Activated B cell treated with CpG ODN at 0.5 μM for 24 hours (primary cell): ENCODE measurements at regions of chr15 and their contacts with region 1.

Region 1: DNA sequence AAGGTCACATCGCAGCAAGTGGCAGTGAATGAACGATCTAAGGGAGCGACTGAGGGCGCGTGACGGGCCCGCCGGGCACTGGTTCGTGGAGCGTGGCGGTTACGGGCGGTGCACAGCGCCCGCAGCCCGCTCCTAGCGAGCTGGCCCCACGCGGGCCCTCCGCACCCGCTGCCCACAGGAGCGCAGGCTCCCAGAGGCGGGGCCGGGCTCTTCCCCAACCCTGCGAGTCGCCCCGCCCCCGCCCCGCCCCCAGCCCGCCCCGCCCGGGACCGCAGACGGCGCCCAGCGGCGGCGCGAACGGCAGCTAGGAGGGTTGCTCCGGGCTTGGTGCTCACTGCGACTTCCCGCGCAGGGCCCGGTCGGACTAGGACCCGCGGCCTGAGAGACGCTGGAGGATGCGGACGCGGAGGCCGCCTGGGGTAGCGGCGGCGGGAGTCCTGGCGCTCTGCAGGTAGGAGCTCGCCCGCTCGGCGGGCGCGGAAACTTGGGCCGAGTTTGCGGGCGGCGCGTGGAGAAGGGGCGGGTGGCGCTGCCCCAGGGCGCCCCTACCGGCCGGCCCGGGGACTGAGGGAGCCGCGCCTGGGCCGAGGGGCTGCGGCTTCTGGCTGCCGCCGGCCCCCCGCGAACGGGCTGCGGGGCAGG is at the start of gene C15orf39:
- DNase-seq: peak; percentile 83
- ATAC-seq: peak; percentile 58
- H3K4me3 Mint-ChIP-seq: peak within 1 kb of the TSS; percentile 90
- H3K27ac Mint-ChIP-seq: peak within 1 kb of the TSS; percentile 82
- H3K4me1 Mint-ChIP-seq: peaks cover 37% of the 10 kb centered on the region
- H3K27me3 Mint-ChIP-seq: peaks cover 4% of the 10 kb centered on the region
- CTCF ChIP-seq: no peak
- total RNA-seq, gene C15orf39: 59.6 and 73.2 TPM in 2 replicates

Region 2: DNA sequence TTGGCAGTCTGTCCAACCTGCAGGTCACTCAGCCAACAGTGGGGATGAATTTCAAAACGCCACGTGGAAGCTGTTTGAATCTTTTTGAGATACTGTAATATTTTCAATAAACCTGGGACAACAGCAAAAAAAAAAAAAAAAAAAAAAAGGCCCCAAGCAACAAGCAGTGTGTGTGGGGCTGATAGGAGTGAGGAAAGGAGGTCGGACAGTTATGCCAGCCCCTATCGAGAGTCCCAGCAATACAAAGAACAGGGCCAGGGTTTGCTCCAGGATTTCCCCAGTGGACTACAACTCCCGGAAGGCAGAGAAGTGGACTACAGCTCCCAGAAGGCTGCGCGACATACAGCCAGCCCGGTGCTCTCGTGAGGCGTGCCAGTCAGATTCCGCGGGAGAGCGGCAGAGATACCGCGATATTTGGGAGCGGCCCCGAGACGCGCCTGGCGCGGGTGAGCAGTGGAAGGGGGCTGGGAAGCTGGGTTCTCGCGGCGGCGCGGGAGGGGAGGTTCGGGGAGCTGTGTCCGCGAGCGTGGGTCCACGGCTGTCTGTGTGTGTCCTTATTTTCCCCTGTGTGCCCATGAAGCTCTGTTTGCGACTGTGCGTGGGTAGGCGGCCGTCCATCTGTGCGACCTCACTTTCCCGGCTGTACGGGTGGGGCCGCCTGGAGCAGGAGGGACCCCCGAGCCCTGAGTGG is 178.4 kb before region 1 on chr15 and contains the start of gene PPCDC:
- CTCF ChIA-PET with region 1: interaction called, 62 read pairs
- POLR2A ChIA-PET with region 1: interaction called, 11 read pairs
- intact Hi-C with region 1: loop called (anchors 1 kb)
- DNase-seq: peak; percentile 82
- ATAC-seq: peak; percentile 100
- H3K4me3 Mint-ChIP-seq: peak within 1 kb of the TSS; percentile 95
- H3K27ac Mint-ChIP-seq: peak within 1 kb of the TSS; percentile 86
- H3K4me1 Mint-ChIP-seq: peaks cover 9% of the 10 kb centered on the region
- H3K27me3 Mint-ChIP-seq: peaks cover 6% of the 10 kb centered on the region
- CTCF ChIP-seq: no peak
- total RNA-seq, gene PPCDC: 13.5 and 16.6 TPM in 2 replicates

Region 3: DNA sequence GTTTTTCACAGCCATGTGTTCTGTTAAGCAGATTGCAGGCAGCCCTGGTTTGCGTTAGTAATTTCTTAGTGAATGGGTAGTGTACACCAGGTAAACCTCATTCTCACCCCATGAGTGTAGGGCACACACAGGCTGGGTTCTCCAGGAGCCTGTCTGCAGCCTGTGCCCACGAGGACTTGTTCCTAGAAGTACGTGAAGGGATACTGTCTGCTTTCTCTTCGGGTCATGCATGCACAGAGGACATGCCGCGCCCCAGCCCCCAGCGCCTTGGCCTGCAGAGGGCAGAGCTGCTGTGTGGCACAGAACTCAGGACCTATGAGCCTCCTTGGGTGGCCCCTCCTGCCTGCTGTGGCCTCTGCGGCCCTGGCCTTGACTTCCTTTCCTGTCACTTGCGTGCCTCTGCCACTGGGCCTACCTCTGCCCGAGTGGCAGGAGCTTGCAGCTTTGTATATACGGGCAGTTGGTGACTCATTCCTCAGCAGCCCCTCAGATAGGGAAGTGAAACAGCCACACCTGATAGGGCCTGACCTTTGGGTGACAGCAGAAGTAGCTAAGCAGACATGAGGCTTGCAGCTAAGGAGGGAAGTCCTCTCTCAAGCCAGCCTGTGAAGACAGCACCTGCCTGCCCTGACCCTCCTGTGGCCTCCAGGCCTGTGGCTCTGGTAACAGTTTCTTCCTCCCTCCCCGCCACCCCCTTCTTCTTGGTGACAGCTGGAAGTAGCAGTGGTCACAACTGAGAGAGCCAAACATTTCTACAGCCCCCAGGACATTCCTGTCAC is 158.8 kb before region 1 on chr15:
- CTCF ChIA-PET with region 1: interaction called, 149 read pairs
- POLR2A ChIA-PET with region 1: interaction called, 8 read pairs
- intact Hi-C with region 1: loop called (anchors 1 kb)
- DNase-seq: peak; percentile 82
- ATAC-seq: peak; percentile 87
- H3K4me3 Mint-ChIP-seq: peak overlapping the region; percentile 70
- H3K27ac Mint-ChIP-seq: peak overlapping the region; percentile 84
- H3K4me1 Mint-ChIP-seq: peaks cover 60% of the 10 kb centered on the region
- H3K27me3 Mint-ChIP-seq: no peaks in the 10 kb centered on the region
- CTCF ChIP-seq: no peak

Region 4: GRCh38 chr15:75104804-75105535 is 96.8 kb before region 1 on chr15:
- CTCF ChIA-PET with region 1: interaction called, 8 read pairs
- POLR2A ChIA-PET with region 1: interaction called, 24 read pairs
- intact Hi-C with region 1: loop called (anchors 1 kb)
- DNase-seq: no peak
- ATAC-seq: peak; percentile 47
- H3K4me3 Mint-ChIP-seq: peak overlapping the region; percentile 56
- H3K27ac Mint-ChIP-seq: peak overlapping the region; percentile 80
- H3K4me1 Mint-ChIP-seq: peaks cover 61% of the 10 kb centered on the region
- H3K27me3 Mint-ChIP-seq: peaks cover 5% of the 10 kb centered on the region
- CTCF ChIP-seq: no peak

Region 5: GRCh38 chr15:75178171-75179075 is 23.3 kb before region 1 on chr15:
- CTCF ChIA-PET with region 1: interaction called, 5 read pairs
- POLR2A ChIA-PET with region 1: interaction called, 5 read pairs
- intact Hi-C with region 1: loop called (anchors 2 kb)
- DNase-seq: no peak
- ATAC-seq: peak; percentile 60
- H3K4me3 Mint-ChIP-seq: no peak overlapping the region
- H3K27ac Mint-ChIP-seq: no peak overlapping the region
- H3K4me1 Mint-ChIP-seq: peaks cover 11% of the 10 kb centered on the region
- H3K27me3 Mint-ChIP-seq: peaks cover 42% of the 10 kb centered on the region
- CTCF ChIP-seq: no peak